ENCODE measurements at regions of chr17 and their contacts with region 1.

Region 1: DNA sequence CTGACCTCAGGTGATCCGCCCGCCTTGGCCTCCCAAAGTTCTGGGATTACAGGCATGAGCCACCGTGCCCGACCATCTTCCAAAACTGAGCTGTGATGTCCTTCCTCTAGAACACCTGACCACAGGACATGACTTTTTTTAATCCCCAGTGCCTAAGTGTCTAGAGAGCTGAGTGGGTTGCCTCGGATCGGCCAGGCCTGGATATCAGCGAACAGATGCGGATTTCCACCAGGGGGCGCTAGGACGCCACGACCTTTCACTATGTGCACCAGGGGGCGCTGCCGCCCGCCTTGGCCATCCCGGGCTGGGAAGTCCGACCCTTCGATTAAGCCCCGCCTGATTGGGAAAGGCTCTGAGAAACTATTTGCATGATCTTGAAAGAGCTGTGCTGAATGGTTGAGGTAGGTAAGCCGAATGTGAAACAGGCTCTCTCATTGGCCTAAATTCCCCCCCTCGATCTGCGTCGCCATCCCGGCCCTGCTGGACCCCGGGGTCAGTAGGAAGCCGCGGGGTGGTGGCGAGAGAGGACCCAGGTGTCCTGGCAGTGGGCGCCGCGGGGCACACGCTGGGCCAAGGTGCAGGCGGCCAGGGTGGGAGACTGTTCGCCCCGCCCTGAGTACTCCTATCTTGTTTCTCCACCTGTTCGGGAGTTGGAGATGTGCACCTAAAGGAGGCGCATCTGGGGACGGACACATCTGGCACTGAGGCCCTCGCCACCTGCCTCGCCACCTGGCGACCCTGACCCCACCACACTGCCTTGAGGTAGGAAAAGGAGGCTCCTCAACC is at the start of gene ACBD4:
- DNase-seq: peak; percentile 98
- H3K4me3 Mint-ChIP-seq: peak within 1 kb of the TSS; percentile 79
- H3K27ac Mint-ChIP-seq: peak within 1 kb of the TSS; percentile 63
- H3K4me1 Mint-ChIP-seq: peaks cover 17% of the 10 kb centered on the region
- H3K27me3 Mint-ChIP-seq: no peaks in the 10 kb centered on the region
- CTCF ChIP-seq: peak; percentile 100
- total RNA-seq, gene ACBD4: 7.2 and 7.8 TPM in 2 replicates

Region 2: DNA sequence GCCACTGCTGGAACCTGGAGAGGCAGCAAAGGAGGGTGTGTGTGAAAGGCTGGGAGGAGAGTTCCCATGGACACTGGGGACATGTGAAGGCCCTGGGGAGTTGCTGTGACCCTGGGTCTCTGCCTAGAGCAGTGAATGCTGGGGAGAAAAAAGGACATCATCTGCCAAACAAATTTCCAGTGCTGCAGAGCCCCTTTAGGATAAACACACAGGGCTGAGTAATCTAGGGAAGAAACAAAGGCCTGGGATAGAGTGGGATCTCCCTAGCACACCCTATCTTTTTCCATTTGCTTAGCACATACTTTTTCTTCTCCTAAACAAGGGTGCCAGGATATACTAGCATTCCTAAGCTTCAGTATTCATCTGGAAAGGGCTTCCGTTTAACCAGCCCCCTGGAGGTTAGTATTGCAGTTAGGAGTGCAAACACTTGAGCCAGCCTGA is 291.0 kb before region 1 on chr17:
- CTCF ChIA-PET with region 1: no interaction called
- POLR2A ChIA-PET with region 1: no interaction called
- intact Hi-C with region 1: no loop called
- DNase-seq: no peak
- H3K4me3 Mint-ChIP-seq: no peak overlapping the region
- H3K27ac Mint-ChIP-seq: no peak overlapping the region
- H3K4me1 Mint-ChIP-seq: no peaks in the 10 kb centered on the region
- H3K27me3 Mint-ChIP-seq: no peaks in the 10 kb centered on the region
- CTCF ChIP-seq: no peak

Region 3: GRCh38 chr17:44899069-44899782 is 236.2 kb before region 1 on chr17 and contains the start of gene EFTUD2:
- CTCF ChIA-PET with region 1: interaction called, 4 read pairs
- POLR2A ChIA-PET with region 1: interaction called, 7 read pairs
- intact Hi-C with region 1: loop called (anchors 2 kb)
- DNase-seq: peak; percentile 87
- H3K4me3 Mint-ChIP-seq: peak within 1 kb of the TSS; percentile 80
- H3K27ac Mint-ChIP-seq: peak within 1 kb of the TSS; percentile 99
- H3K4me1 Mint-ChIP-seq: peaks cover 21% of the 10 kb centered on the region
- H3K27me3 Mint-ChIP-seq: no peaks in the 10 kb centered on the region
- CTCF ChIP-seq: no peak
- total RNA-seq, gene EFTUD2: 119 and 125 TPM in 2 replicates

Region 4: GRCh38 chr17:45098869-45099616 is 36.3 kb before region 1 on chr17:
- CTCF ChIA-PET with region 1: interaction called, 17 read pairs
- POLR2A ChIA-PET with region 1: interaction called, 7 read pairs
- intact Hi-C with region 1: loop called (anchors 1 kb)
- DNase-seq: peak; percentile 85
- H3K4me3 Mint-ChIP-seq: no peak overlapping the region
- H3K27ac Mint-ChIP-seq: peak overlapping the region; percentile 86
- H3K4me1 Mint-ChIP-seq: peaks cover 33% of the 10 kb centered on the region
- H3K27me3 Mint-ChIP-seq: no peaks in the 10 kb centered on the region
- CTCF ChIP-seq: peak; percentile 93

Region 5: GRCh38 chr17:45123930-45124796 is 11.2 kb before region 1 on chr17:
- CTCF ChIA-PET with region 1: interaction called, 26 read pairs
- POLR2A ChIA-PET with region 1: interaction called, 4 read pairs
- intact Hi-C with region 1: no loop called
- DNase-seq: peak; percentile 89
- H3K4me3 Mint-ChIP-seq: peak overlapping the region; percentile 35
- H3K27ac Mint-ChIP-seq: peak overlapping the region; percentile 91
- H3K4me1 Mint-ChIP-seq: peaks cover 42% of the 10 kb centered on the region
- H3K27me3 Mint-ChIP-seq: no peaks in the 10 kb centered on the region
- CTCF ChIP-seq: no peak

Region 6: GRCh38 chr17:45172454-45173286 is 37.3 kb after region 1 on chr17:
- CTCF ChIA-PET with region 1: interaction called, 23 read pairs
- POLR2A ChIA-PET with region 1: interaction called, 20 read pairs
- intact Hi-C with region 1: no loop called
- DNase-seq: peak; percentile 98
- H3K4me3 Mint-ChIP-seq: peak overlapping the region; percentile 78
- H3K27ac Mint-ChIP-seq: peak overlapping the region; percentile 99
- H3K4me1 Mint-ChIP-seq: peaks cover 26% of the 10 kb centered on the region
- H3K27me3 Mint-ChIP-seq: no peaks in the 10 kb centered on the region
- CTCF ChIP-seq: peak; percentile 27

Region 7: DNA sequence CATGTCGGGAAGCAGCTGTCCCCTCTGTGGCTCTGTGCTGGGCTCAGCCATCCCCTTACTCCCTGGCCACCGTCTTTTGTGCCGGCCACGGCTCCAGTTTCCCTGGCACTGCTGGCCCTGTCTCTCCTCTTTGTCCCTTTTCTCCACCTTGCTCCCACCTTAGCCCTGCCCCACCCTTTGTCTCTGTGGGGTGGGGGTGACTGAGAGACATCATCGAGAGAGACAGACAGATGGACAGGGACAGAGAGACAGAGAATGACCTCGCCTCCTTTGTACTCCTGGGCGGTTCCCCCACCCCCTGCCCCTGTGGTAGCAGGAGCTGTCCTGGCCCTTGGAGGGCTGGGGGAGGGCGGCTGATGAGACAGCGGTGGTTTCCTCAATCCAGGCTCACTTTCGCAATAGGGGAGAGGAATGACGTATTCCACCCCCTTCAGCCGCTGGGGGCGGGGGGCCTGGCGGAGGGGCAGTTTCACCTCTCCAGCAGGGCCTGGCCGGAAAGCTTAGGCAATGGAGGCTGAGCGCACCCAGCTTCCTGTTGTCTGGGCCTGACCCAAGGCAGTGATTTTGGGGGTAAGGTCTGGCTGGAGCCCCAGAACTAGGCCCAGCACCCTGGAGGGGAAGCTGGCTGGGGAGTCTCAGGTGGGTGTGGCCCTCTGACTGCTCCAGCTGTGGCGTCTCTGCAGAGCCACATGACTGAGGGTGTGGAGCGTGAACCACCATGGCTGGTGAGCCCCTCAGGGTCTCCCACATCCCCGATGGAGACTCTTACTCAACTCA is 93.6 kb after region 1 on chr17:
- CTCF ChIA-PET with region 1: interaction called, 10 read pairs
- POLR2A ChIA-PET with region 1: no interaction called
- intact Hi-C with region 1: no loop called
- DNase-seq: peak; percentile 97
- H3K4me3 Mint-ChIP-seq: peak overlapping the region; percentile 46
- H3K27ac Mint-ChIP-seq: peak overlapping the region; percentile 91
- H3K4me1 Mint-ChIP-seq: peaks cover 53% of the 10 kb centered on the region
- H3K27me3 Mint-ChIP-seq: no peaks in the 10 kb centered on the region
- CTCF ChIP-seq: no peak

Region 8: GRCh38 chr17:45345554-45346215 is 210.3 kb after region 1 on chr17:
- CTCF ChIA-PET with region 1: no interaction called
- POLR2A ChIA-PET with region 1: no interaction called
- intact Hi-C with region 1: no loop called
- DNase-seq: no peak
- H3K4me3 Mint-ChIP-seq: no peak overlapping the region
- H3K27ac Mint-ChIP-seq: no peak overlapping the region
- H3K4me1 Mint-ChIP-seq: peaks cover 8% of the 10 kb centered on the region
- H3K27me3 Mint-ChIP-seq: no peaks in the 10 kb centered on the region
- CTCF ChIP-seq: no peak

Region 9: DNA sequence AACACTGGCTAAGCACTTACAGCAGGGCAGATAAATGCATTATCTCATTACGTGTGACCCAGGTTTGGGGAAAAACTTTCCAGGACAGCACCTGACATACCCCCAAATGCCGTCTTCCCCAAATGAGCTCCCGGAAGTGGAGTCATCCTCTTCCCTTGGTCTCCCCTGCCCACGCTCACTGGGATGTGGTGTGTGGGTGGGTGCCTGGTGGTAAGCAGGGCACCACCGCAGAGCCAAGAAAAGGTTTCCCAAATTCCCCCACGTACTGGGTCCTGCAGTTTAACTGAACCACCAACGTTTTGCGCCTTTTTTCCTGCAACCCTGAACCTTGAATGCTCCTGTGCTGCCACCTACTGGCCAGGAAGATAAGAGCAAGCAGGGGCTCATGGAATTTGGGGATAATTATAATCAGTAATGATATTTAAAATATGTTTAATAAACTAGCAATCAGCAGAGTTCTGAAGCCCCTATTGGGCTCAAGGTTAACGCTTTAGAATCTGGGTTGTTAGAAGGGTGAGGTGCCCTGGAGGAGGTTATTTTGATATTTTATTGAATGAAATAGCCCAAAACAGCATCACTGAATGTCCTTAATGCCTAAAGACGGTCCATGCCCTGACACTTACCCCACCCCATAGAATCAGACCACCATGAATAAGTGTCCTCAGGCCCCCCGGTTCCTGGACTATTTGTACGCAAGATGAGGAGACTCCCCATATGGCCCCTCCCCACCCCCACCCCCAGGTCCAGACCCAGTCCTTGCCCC is 717.3 kb after region 1 on chr17:
- CTCF ChIA-PET with region 1: interaction called, 6 read pairs
- POLR2A ChIA-PET with region 1: no interaction called
- intact Hi-C with region 1: loop called (anchors 5 kb)
- DNase-seq: peak; percentile 73
- H3K4me3 Mint-ChIP-seq: no peak overlapping the region
- H3K27ac Mint-ChIP-seq: no peak overlapping the region
- H3K4me1 Mint-ChIP-seq: no peaks in the 10 kb centered on the region
- H3K27me3 Mint-ChIP-seq: peaks cover 34% of the 10 kb centered on the region
- CTCF ChIP-seq: peak; percentile 87